Stomach (tissue), 19 donors: ENCODE measurements at regions of chr5 and their contacts with region 1.

Region 1: DNA sequence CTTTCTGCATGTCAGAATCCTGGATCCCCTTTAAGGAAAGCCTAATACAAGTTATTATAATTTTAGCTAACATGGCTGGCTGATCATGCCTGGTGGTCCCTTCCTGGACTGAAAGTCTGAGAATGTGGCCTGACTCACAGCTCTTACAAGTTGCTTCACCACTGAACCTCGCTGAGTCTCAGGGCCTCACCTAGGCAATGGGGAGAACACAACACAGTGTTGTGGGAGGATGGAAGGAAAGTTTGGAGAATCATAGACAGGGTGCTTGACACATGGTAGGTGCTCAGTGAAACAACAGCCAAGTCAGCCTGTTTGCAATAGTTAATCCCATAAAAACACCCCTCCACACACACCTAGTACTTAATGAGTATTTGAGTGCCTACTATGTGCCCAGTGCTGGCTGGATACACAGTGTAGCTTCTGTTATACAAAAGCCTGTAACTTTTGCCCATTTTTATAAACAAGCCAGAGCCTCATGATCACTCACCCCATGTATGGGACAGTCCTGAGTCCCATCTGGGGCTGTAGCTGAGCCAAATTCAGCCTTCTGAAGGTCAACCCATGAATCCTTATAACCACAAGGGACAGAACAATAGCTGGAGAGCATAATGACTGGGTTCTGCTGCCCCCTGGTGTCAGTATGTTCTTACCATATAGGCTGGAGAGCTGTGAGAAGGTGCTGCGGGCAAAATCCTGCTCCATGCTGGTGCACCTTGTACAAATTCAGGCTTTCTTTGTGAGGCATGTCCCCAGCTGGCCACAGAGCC is 3.9 kb downstream of the ACSL6 start:
- DNase-seq: peak; percentile 85 to 92
- H3K4me3 ChIP-seq: no peak overlapping the region
- H3K27ac ChIP-seq: no peak overlapping the region
- H3K4me1 ChIP-seq: peaks cover 4 to 19% (median 12%) of the 10 kb centered on the region in 4 donors
- H3K27me3 ChIP-seq: peaks cover 0 to 45% (median 21%) of the 10 kb centered on the region in 3 donors
- CTCF ChIP-seq: peak in 5 of 7 experiments; percentile 54 to 75 (median 56)
- EP300 ChIP-seq: no peak
- POLR2A ChIP-seq: no peak

Region 2: DNA sequence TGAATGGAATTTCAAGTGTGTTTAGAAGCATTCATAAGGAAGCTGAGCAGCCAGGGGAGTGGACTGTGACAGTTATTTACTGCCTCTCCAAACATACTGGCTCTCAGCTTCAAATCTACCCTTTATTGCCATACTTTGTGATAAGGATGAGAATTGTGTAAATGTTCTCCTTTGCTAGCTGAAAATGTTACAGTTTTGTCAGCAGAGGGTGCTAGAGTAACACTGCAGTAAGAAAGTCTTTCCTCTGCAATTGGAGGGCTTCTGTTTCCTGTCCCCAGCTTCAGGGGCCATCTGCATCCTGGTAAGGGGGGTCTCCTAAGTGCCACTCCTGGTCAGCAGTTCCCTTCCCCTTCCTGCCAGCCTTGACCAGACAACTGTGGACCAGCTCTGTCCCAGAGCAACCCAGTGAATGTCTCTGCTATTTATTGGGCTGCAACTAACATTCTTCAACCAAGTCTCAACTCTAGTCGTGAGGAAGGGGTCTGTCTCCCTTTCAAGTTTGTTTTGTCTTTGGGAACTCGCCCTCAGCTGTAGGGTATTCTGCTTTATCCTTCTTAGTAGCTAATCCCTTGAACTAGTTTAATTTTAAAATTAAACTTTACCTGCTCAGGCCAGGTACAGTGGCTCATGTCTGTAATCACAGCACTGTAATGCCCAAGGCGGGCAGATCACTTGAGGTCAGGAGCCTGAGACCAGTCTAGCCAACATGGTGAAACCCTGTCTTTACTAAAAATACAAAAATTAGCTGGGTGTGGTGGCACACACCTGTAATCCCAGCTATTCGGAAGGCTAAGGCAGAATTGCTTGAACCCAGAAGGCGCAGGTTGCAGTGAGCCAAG is 417.9 kb before region 1 on chr5:
- intact Hi-C with region 1: loop called (anchors 5 kb)
- DNase-seq: peak in 1 of 2 donors; percentile 88
- H3K4me3 ChIP-seq: no peak overlapping the region
- H3K27ac ChIP-seq: no peak overlapping the region
- H3K4me1 ChIP-seq: peaks cover 0 to 22% (median 11%) of the 10 kb centered on the region in 4 donors
- H3K27me3 ChIP-seq: no peaks in the 10 kb centered on the region
- CTCF ChIP-seq: peak in 5 of 7 experiments; percentile 61 to 81 (median 78)
- EP300 ChIP-seq: no peak
- POLR2A ChIP-seq: no peak